Endothelial cell of umbilical vein (primary cell): ENCODE measurements at regions of chr14 and their contacts with region 1.

Region 1: DNA sequence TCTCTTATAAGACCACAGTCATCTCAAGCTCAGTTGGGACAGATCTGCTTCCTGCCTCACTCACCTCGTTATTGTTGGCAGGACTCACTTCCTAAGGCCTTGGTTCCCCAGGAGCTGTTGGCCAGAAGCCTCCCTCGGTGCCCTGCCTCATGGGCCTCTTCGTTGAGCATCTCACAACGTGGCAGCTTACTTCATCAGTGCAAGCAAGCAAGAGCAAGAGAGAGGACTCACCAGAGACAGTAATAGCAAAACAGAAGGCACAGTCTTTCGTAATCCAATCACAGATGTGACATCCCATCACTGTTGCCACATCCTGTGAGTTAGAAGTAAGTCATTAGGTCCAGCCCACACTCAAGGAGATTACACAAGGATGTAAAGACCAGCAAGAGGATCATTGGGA is 5.1 kb upstream of the NUMB start:
- DNase-seq: peak; percentile 86
- H3K4me3 ChIP-seq: no peak overlapping the region
- H3K27ac ChIP-seq: peak overlapping the region; percentile 70
- H3K4me1 ChIP-seq: peaks cover 81% of the 10 kb centered on the region
- H3K27me3 ChIP-seq: no peaks in the 10 kb centered on the region
- CTCF ChIP-seq: no peak
- POLR2A ChIP-seq: no peak

Region 2: DNA sequence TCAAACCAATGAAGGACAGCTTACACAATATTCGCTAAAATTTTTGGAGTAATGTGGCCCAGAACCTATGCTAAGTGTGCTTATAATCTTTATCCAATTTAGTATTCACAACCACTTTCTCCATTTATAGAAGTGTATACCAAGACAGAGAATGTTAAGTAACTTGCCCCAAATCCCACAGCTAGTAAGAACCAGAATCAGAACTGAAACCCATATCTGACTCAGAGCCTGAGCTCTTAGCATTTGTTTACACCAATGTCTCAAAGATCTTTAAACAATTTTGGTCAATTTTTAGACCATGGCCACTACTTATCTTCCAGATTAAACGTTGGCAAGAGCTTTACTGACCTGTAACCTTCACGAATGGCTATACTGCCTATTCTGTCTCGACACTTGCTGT is 173.1 kb before region 1 on chr14:
- CTCF ChIA-PET with region 1: interaction called, 559 read pairs
- POLR2A ChIA-PET with region 1: interaction called, 13 read pairs
- dilution Hi-C with region 1: loop called (anchors 25 kb)
- intact Hi-C with region 1: loop called (anchors 5 kb)
- DNase-seq: no peak
- H3K4me3 ChIP-seq: no peak overlapping the region
- H3K27ac ChIP-seq: no peak overlapping the region
- H3K4me1 ChIP-seq: peaks cover 3% of the 10 kb centered on the region
- H3K27me3 ChIP-seq: no peaks in the 10 kb centered on the region
- CTCF ChIP-seq: no peak
- POLR2A ChIP-seq: no peak

Region 3: DNA sequence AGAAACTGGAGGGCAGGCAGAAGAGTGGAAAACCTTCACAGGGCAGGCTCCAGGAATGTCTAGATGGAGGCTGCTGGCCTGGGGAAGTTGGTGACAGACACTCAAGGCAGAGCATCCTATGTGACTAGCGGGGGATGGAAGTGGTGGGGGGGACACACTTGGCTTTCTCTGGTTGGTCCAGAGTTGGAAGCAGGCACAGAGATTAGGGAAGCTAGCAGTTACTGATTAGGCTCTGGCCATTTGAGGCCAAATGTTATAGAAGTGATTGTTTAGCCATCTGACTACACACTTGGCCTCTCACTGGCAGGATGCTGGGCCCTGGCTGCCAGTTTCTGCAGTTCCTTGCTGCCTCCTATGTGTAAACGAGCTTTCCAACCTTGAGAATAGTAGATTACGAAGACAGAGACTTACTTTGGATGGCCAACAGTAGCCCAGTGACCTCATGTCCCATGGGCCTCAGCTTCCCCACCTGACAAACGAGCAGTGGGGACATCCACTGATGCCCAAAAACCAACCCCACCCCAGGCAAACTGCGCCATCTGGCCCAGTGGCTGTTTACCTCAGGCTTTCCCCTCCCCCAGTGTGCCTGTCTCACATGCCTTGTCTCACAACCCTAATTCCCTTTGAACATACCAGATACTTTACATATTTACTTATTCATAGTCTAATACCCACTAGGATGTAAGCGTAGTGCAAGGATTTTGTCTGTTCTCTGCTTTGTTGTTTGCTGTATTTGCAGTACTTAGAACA is 123.4 kb before region 1 on chr14:
- CTCF ChIA-PET with region 1: no interaction called
- POLR2A ChIA-PET with region 1: no interaction called
- dilution Hi-C with region 1: no loop called
- intact Hi-C with region 1: no loop called
- DNase-seq: no peak
- H3K4me3 ChIP-seq: no peak overlapping the region
- H3K27ac ChIP-seq: no peak overlapping the region
- H3K4me1 ChIP-seq: no peaks in the 10 kb centered on the region
- H3K27me3 ChIP-seq: no peaks in the 10 kb centered on the region
- CTCF ChIP-seq: no peak
- POLR2A ChIP-seq: no peak

Region 4: GRCh38 chr14:73491256-73492042 is 28.0 kb after region 1 on chr14:
- CTCF ChIA-PET with region 1: no interaction called
- POLR2A ChIA-PET with region 1: no interaction called
- dilution Hi-C with region 1: no loop called
- intact Hi-C with region 1: loop called (anchors 2 kb)
- DNase-seq: peak; percentile 71
- H3K4me3 ChIP-seq: peak overlapping the region; percentile 37 to 78 (median 65)
- H3K27ac ChIP-seq: peak overlapping the region; percentile 51
- H3K4me1 ChIP-seq: peaks cover 15% of the 10 kb centered on the region
- H3K27me3 ChIP-seq: no peaks in the 10 kb centered on the region
- CTCF ChIP-seq: no peak
- POLR2A ChIP-seq: peak; percentile 9